ENCODE measurements at regions of chr20 and their contacts with region 1.

Region 1: DNA sequence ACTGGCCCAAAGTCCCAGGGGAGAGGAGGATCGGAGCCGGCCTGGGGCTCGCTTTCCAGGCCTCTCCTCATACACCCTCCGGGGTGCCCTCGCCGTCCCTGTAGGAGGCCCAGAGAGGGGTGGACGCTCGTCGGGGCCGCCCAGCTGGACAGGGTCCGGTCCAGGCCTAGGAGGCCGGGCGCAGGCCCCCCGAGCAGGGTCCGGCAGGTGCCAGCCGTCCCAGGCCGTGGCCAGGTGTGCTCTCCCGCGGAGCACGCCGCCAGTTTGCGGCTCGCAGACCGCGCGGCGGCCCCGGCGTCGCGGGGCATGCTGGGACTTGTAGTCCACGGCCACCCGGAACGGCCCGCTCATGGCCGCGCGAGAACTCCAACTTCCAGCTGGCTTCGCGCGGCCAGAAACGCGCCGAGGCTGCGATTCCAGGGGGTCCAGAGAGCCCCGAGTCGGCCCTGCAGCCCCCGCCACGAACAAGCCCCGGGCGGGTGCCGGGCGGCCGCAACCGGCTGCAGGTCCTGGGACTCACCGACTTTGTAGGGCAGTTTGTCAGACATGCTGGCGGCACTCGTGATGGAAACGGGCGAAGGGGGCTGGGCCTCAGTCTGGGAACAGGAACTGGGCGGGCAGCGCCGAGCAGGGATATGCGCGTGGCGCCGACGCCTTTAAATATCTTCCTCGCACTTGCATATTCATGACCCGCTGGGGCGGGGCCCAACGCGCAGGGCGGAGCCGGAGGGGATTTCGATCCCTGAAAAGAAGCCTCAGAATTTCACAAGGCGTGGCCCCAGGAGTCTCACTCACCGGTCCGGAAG is at the start of gene AHCY:
- DNase-seq: peak; percentile 97 to 99
- H3K4me3 ChIP-seq: peak within 1 kb of the TSS; percentile 94
- H3K4me1 ChIP-seq: peaks cover 15% of the 10 kb centered on the region
- H3K27me3 ChIP-seq: no peaks in the 10 kb centered on the region

Region 2: GRCh38 chr20:34355427-34355826 is 52.5 kb after region 1 on chr20:
- in situ Hi-C with region 1: no loop called
- DNase-seq: no peak
- H3K4me3 ChIP-seq: no peak overlapping the region
- H3K4me1 ChIP-seq: no peaks in the 10 kb centered on the region
- H3K27me3 ChIP-seq: no peaks in the 10 kb centered on the region

Region 3: GRCh38 chr20:34516247-34517113 is 213.6 kb after region 1 on chr20 and contains the start of gene DYNLRB1:
- in situ Hi-C with region 1: loop called (anchors 5 kb)
- DNase-seq: peak; percentile 91 to 99
- H3K4me3 ChIP-seq: peak within 1 kb of the TSS; percentile 96
- H3K4me1 ChIP-seq: peaks cover 11% of the 10 kb centered on the region
- H3K27me3 ChIP-seq: no peaks in the 10 kb centered on the region

Region 4: GRCh38 chr20:34704177-34705007 is 401.5 kb after region 1 on chr20 and contains the start of gene TP53INP2:
- in situ Hi-C with region 1: loop called (anchors 25 kb)
- DNase-seq: peak; percentile 87 to 96
- H3K4me3 ChIP-seq: peak within 1 kb of the TSS; percentile 73
- H3K4me1 ChIP-seq: peaks cover 15% of the 10 kb centered on the region
- H3K27me3 ChIP-seq: no peaks in the 10 kb centered on the region

Measured in HAP-1 (cell line).